Activated CD8-positive, alpha-beta memory T cell treated with anti-CD3 and anti-CD28 coated beads, Interleukin-2, amount 10 ng/mL, durations not matched to agents 7 days and 5 days (primary cell): ENCODE measurements at regions of chr1 and their contacts with region 1.

Region 1: GRCh38 chr1:207336559-207337467 is 15.3 kb downstream of the CD55 start:
- DNase-seq: peak; percentile 84
- ATAC-seq: peak; percentile 71
- H3K4me3 Mint-ChIP-seq: peak overlapping the region; percentile 47
- H3K27ac Mint-ChIP-seq: peak overlapping the region; percentile 91
- H3K4me1 Mint-ChIP-seq: peaks cover 59% of the 10 kb centered on the region
- H3K27me3 Mint-ChIP-seq: peaks cover 2% of the 10 kb centered on the region

Region 2: DNA sequence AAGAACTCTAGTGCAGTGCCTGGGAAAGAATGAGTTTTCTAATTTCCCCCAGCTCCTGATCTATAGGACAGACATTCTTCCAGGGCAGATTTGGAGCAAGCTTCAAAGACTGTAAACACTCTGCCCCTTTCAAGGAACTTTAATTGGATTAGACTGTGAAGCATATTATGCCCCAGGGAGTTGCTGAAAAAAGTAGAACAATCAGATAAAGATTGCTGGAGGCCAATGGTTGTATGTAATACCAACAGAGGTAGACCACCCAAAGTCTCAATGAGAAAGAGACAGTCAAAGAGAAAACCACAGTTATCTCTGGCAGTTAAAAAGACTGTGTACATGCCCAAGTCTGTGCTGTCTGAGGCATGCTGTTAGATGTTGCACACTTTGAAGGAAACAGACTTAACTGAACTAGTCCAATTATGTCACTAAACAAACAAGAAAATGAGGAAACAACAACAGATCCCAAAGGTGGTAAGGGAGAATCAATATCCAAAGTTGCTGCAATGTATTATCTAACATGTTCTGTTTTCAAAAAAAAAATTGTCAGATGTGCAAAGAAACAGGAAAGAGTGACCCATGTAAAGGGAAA is 208.4 kb before region 1 on chr1:
- CTCF ChIA-PET with region 1: no interaction called
- DNase-seq: no peak
- ATAC-seq: no peak
- H3K4me3 Mint-ChIP-seq: no peak overlapping the region
- H3K27ac Mint-ChIP-seq: no peak overlapping the region
- H3K4me1 Mint-ChIP-seq: no peaks in the 10 kb centered on the region
- H3K27me3 Mint-ChIP-seq: peaks cover 17% of the 10 kb centered on the region

Region 3: DNA sequence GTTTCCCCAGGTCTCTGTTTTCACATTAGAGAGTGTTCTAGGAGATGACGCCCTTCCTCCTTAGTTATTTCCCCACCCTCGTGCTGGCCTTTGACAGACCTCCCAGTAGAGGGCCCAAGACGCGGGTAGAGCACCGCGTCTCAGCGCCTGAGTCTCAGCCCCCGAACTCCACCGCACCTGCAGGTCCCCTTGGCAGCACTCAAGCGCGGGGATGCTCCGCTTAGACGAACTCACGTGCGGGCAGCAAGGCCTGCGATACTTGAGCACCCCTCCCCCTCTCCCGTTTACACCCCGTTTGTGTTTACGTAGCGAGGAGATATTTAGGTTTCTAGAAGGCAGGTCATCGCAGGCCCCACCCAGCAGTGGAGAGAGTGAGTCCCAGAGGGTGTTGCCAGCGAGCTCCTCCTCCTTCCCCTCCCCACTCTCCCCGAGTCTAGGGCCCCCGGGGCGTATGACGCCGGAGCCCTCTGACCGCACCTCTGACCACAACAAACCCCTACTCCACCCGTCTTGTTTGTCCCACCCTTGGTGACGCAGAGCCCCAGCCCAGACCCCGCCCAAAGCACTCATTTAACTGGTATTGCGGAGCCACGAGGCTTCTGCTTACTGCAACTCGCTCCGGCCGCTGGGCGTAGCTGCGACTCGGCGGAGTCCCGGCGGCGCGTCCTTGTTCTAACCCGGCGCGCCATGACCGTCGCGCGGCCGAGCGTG is 15.6 kb before region 1 on chr1 and contains the start of gene CD55:
- CTCF ChIA-PET with region 1: interaction called, 32 read pairs
- DNase-seq: peak; percentile 100
- ATAC-seq: peak; percentile 93
- H3K4me3 Mint-ChIP-seq: peak within 1 kb of the TSS; percentile 88
- H3K27ac Mint-ChIP-seq: peak within 1 kb of the TSS; percentile 98
- H3K4me1 Mint-ChIP-seq: peaks cover 31% of the 10 kb centered on the region
- H3K27me3 Mint-ChIP-seq: peaks cover 3% of the 10 kb centered on the region
- total RNA-seq, gene CD55: 64.9 to 96.9 TPM